Stomach (tissue), 19 donors: ENCODE measurements at regions of chr5 and their contacts with region 1.

Region 1: GRCh38 chr5:15995341-15996052 is 184.1 kb downstream of the MARCHF11 start:
- DNase-seq: peak in 1 of 2 donors; percentile 41
- H3K4me3 ChIP-seq: no peak overlapping the region
- H3K27ac ChIP-seq: no peak overlapping the region
- H3K4me1 ChIP-seq: no peaks in the 10 kb centered on the region
- H3K27me3 ChIP-seq: no peaks in the 10 kb centered on the region
- CTCF ChIP-seq: peak in 4 of 7 experiments; percentile 12 to 23 (median 16)
- EP300 ChIP-seq: no peak
- POLR2A ChIP-seq: no peak

Region 2: GRCh38 chr5:15105796-15106393 is 889.6 kb before region 1 on chr5:
- intact Hi-C with region 1: loop called (anchors 10 kb)
- DNase-seq: peak; percentile 37 to 72
- H3K4me3 ChIP-seq: no peak overlapping the region
- H3K27ac ChIP-seq: no peak overlapping the region
- H3K4me1 ChIP-seq: peaks cover 0 to 9% (median 0%) of the 10 kb centered on the region in 4 donors
- H3K27me3 ChIP-seq: no peaks in the 10 kb centered on the region
- CTCF ChIP-seq: peak in 5 of 7 experiments; percentile 17 to 78 (median 62)
- EP300 ChIP-seq: no peak
- POLR2A ChIP-seq: no peak

Region 3: GRCh38 chr5:15388866-15389265 is 606.6 kb before region 1 on chr5:
- intact Hi-C with region 1: loop called (anchors 5 kb)
- DNase-seq: peak in 1 of 2 donors; percentile 55
- H3K4me3 ChIP-seq: no peak overlapping the region
- H3K27ac ChIP-seq: no peak overlapping the region
- H3K4me1 ChIP-seq: no peaks in the 10 kb centered on the region
- H3K27me3 ChIP-seq: peaks cover 0 to 3% (median 0%) of the 10 kb centered on the region in 3 donors
- CTCF ChIP-seq: no peak
- EP300 ChIP-seq: no peak
- POLR2A ChIP-seq: no peak